ENCODE measurements at regions of chr13 and their contacts with region 1.

Region 1: DNA sequence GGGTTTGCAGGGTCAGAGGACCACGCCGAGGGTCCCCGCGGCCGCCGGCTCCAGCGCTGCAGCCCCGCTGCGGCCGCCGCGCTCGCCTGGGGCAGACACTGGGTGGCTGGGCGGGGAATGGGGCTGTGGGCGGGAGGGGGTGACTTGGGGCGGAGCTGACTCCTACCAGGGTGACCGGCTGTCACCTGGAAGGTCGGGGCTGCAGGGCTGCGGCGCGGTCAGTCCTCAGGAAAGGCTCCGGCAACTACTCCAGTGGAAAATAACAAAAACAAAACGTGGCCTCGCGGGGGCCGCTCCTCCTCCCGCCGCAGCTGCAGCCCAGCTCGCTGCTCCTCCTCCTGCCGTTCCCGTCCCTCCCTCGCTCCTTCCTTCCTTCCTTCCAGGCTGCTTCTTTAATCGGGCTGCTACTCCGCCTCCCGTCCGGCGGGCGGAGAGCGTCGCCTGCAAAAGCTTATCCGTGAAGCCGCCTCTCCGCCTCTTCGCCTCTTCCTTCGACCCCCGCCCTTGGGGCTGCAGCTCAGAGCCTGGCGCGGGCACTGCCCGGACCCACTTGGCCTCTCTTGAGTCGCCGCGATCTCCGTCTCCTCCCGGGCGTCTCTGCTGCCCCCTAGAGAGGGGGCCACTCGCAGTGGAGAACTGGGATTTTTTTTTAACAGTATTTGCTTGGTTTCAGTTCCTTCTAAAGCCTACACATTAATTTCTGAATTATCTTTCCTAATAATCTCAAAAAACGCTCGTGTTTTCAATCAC is at the start of gene TBC1D4:
- DNase-seq: peak; percentile 82
- CTCF ChIP-seq: peak; percentile 77

Region 2: GRCh38 chr13:75372517-75372916 is 109.7 kb before region 1 on chr13:
- CTCF ChIA-PET with region 1: interaction called, 59 read pairs
- POLR2A ChIA-PET with region 1: no interaction called
- DNase-seq: peak; percentile 40
- CTCF ChIP-seq: peak; percentile 73

Region 3: GRCh38 chr13:75468098-75468497 is 14.1 kb before region 1 on chr13:
- CTCF ChIA-PET with region 1: interaction called, 17 read pairs
- POLR2A ChIA-PET with region 1: no interaction called
- DNase-seq: no peak
- CTCF ChIP-seq: no peak

Region 4: DNA sequence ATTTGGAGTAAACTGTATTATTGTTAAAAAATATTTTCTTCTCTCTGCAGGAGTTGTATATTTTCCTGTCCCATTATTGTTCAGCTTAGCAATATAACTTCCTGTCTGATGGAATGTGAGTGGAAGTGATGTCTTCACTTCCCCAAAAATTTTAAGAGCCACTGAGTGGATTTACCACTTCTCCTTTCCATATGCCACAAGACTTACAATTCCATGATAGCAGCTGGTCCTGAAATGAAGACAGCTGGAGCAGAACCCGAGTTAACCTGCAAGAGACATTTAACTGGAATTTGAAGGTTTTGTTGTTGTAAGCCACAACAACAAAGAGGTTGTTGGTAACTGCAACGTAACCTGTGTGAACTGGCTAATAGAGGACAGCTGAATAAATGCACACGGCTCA is 23.1 kb after region 1 on chr13:
- CTCF ChIA-PET with region 1: interaction called, 10 read pairs
- POLR2A ChIA-PET with region 1: no interaction called
- DNase-seq: no peak
- CTCF ChIP-seq: no peak

Region 5: DNA sequence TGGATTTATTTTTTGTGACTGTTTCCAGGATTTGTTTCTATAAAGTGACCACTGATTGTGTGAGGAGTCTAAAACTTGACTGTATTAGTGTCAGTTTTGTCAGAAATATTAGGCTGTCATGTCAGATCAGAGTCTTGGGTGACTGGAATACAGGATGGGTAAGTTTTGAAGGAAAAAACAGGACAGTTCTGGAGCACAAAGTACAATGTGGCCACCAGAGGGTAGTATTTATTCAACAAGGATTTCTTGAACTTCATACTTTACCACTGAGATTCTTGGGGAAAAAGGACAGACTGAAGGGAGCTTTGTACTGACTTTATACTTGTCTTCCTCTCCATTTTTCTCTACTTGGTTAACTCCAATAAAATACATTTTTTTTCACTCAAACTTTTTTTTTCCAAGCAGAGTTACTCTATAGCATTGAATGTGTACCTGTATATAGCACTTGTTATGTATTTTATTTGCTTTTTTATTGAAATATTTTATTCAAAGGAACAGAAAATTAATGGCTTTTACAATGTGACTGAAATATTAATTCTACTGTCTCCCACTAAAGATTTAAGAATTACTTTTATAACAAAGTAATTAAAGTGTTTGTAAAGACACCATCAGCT is 205.0 kb after region 1 on chr13:
- CTCF ChIA-PET with region 1: no interaction called
- POLR2A ChIA-PET with region 1: no interaction called
- DNase-seq: no peak
- CTCF ChIP-seq: peak; percentile 32